Mammary epithelial cell (primary cell): ENCODE measurements at regions of chr14 and their contacts with region 1.

Region 1: GRCh38 chr14:91963465-91963864 is 16.0 kb upstream of the FBLN5 start:
- DNase-seq: no peak
- H3K4me3 ChIP-seq: no peak overlapping the region
- H3K27ac ChIP-seq: no peak overlapping the region
- H3K4me1 ChIP-seq: no peaks in the 10 kb centered on the region
- H3K27me3 ChIP-seq: no peaks in the 10 kb centered on the region
- CTCF ChIP-seq: no peak

Region 2: GRCh38 chr14:91919814-91920213 is 43.7 kb before region 1 on chr14:
- CTCF ChIA-PET with region 1: no interaction called
- dilution Hi-C with region 1: loop called (anchors 5 kb)
- in situ Hi-C with region 1: no loop called
- intact Hi-C with region 1: no loop called
- DNase-seq: no peak
- H3K4me3 ChIP-seq: no peak overlapping the region
- H3K27ac ChIP-seq: no peak overlapping the region
- H3K4me1 ChIP-seq: peaks cover 3% of the 10 kb centered on the region
- H3K27me3 ChIP-seq: no peaks in the 10 kb centered on the region
- CTCF ChIP-seq: no peak

Region 3: DNA sequence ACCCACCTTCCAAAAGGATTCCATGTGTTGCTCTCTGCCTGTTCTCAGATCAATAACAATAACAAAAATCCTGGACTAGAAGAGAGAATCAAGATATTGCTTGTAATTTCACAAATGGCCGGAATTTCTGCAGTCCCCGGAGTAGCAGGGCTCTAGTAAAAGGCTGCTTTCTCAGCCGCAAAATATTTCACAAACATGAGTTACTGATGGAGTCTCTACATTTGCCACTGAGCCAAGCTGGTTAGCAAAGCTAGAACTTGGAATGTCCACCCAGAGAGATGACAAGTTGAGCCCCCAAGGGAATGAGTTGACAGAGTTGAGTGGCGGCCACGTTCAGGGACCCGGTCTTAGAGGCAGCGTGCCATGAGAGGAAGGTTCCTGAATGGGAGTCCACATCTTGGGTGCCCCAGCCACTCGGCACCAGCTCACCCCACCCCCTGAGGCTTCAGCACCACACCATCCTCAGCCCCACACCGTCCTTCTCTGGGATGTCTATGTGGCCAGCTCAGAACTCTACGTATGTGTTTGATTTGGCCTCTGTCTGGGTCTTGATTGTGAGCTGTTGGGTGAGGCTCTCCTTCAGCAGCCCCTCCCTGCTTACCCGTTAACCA is 31.9 kb before region 1 on chr14:
- CTCF ChIA-PET with region 1: no interaction called
- dilution Hi-C with region 1: no loop called
- in situ Hi-C with region 1: no loop called
- intact Hi-C with region 1: no loop called
- DNase-seq: no peak
- H3K4me3 ChIP-seq: no peak overlapping the region
- H3K27ac ChIP-seq: no peak overlapping the region
- H3K4me1 ChIP-seq: no peaks in the 10 kb centered on the region
- H3K27me3 ChIP-seq: no peaks in the 10 kb centered on the region
- CTCF ChIP-seq: no peak

Region 4: GRCh38 chr14:91996948-91997371 is 33.5 kb after region 1 on chr14:
- CTCF ChIA-PET with region 1: no interaction called
- dilution Hi-C with region 1: no loop called
- in situ Hi-C with region 1: no loop called
- intact Hi-C with region 1: no loop called
- DNase-seq: peak; percentile 83
- H3K4me3 ChIP-seq: no peak overlapping the region
- H3K27ac ChIP-seq: no peak overlapping the region
- H3K4me1 ChIP-seq: peaks cover 5% of the 10 kb centered on the region
- H3K27me3 ChIP-seq: no peaks in the 10 kb centered on the region
- CTCF ChIP-seq: peak; percentile 62 to 68